Cardiac septum (tissue), 1 donor: ENCODE measurements at regions of chr4 and their contacts with region 1.

Region 1: DNA sequence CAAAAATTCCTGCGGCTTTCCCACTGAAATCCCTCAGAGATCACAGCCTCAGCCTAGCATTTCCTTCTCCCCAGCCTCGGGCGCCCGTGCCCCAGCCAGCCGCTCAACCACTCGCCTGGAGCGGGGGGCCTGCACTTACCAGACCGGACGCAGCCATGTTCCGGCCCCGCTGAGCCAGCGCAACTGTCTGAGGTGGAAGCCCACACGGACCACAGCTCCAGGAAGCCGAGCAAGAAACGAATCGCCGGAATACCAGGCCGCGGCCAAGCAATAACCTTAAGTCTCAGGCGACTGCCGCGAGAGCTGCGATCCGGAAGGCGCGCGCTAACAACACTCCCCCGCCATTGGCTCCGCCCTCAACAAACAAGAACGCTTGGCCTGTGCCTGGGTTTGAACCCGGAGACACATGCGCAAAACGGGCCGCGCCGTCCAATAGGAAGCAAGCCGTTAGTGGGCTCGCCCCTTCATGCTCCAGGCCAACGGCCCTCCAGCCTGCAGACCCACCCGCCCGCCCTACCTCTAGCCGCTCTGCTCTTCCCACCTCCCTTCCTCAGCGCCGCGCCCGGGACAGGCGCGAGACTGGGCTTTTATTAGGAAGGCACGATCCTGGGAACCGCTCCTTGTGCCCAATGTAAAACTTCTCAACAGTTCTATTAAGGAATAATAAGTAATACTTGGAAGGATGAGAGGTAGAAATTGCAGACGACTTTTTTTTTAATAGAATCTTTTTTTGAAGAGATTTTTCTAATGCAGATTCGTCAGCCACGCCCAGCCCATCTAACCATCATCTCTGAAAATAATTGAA is at the start of gene CENPC:
- DNase-seq: peak; percentile 97
- total RNA-seq, gene CENPC: 9.3 TPM

Region 2: GRCh38 chr4:67700738-67701516 is 155.5 kb after region 1 on chr4 and contains the start of gene UBA6:
- intact Hi-C with region 1: loop called (anchors 5 kb)
- DNase-seq: peak; percentile 98
- total RNA-seq, gene UBA6: 24.0 TPM